ENCODE measurements at regions of chr1 and their contacts with region 1.

Region 1: DNA sequence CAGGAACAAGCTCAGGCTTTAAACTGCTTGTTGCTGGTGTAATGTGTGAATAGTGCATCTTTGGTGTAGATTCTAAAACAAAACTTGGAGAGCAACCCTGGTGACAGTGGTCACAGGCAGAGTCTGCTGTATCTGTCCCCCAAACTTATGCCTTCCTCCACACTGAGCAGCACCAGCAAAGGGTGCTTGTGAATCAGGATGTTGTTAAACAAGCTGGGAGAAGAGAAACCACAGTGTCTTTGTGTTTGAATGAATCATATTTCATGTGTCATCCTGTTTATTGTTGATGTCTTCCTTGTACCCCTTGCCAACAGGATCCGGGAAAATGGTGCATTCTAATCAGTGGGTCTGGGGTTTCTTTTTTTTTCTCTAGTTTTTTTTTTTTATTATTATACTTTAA is 91.9 kb upstream of the COG2 start:
- DNase-seq: no peak
- H3K4me3 ChIP-seq: no peak overlapping the region
- H3K27ac ChIP-seq: no peak overlapping the region
- H3K4me1 ChIP-seq: no peaks in the 10 kb centered on the region
- H3K27me3 ChIP-seq: no peaks in the 10 kb centered on the region
- CTCF ChIP-seq: no peak
- EP300 ChIP-seq: no peak
- POLR2A ChIP-seq: no peak
- RAD21 ChIP-seq: no peak

Region 2: GRCh38 chr1:230509281-230509977 is 41.0 kb before region 1 on chr1:
- CTCF ChIA-PET with region 1: no interaction called
- POLR2A ChIA-PET with region 1: no interaction called
- DNase-seq: no peak
- H3K4me3 ChIP-seq: no peak overlapping the region
- H3K27ac ChIP-seq: no peak overlapping the region
- H3K4me1 ChIP-seq: no peaks in the 10 kb centered on the region
- H3K27me3 ChIP-seq: no peaks in the 10 kb centered on the region
- CTCF ChIP-seq: no peak
- EP300 ChIP-seq: no peak
- POLR2A ChIP-seq: no peak
- RAD21 ChIP-seq: no peak

Region 3: GRCh38 chr1:230537456-230537855 is 13.0 kb before region 1 on chr1:
- CTCF ChIA-PET with region 1: interaction called, 14 read pairs
- POLR2A ChIA-PET with region 1: no interaction called
- DNase-seq: peak; percentile 15 to 82
- H3K4me3 ChIP-seq: no peak overlapping the region
- H3K27ac ChIP-seq: no peak overlapping the region
- H3K4me1 ChIP-seq: no peaks in the 10 kb centered on the region; a peak in 1 of 7 replicates
- H3K27me3 ChIP-seq: no peaks in the 10 kb centered on the region
- CTCF ChIP-seq: peak; percentile 68 to 87 (median 79)
- EP300 ChIP-seq: no peak
- POLR2A ChIP-seq: no peak
- RAD21 ChIP-seq: peak; percentile 64 to 81

Region 4: DNA sequence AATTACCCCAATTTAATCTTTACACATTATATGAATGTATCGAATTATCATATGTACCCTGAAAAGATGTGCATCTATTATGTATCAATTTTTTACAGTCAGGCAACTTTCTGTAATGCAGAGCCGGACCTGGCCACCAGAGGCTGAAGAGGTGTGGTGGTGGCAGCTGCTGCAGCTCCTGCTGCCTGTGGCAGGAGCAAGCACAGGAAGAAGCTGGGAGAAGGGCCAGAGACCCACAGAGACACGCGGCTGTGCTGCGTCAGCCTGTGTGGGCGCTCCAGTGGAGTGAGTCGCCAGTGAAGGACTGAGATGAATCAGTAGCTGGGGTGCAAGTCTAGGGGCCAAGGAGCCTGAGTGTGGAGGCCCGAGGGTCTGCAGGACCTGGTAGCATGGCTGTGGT is 17.6 kb after region 1 on chr1:
- CTCF ChIA-PET with region 1: interaction called, 11 read pairs
- POLR2A ChIA-PET with region 1: no interaction called
- DNase-seq: peak in 1 of 2 experiments; percentile 46
- H3K4me3 ChIP-seq: no peak overlapping the region
- H3K27ac ChIP-seq: no peak overlapping the region
- H3K4me1 ChIP-seq: peaks cover 0 to 7% (median 3%) of the 10 kb centered on the region in 4 experiments
- H3K27me3 ChIP-seq: no peaks in the 10 kb centered on the region
- CTCF ChIP-seq: peak; percentile 60 to 69 (median 66)
- EP300 ChIP-seq: no peak
- POLR2A ChIP-seq: no peak
- RAD21 ChIP-seq: peak; percentile 48 to 62

Region 5: GRCh38 chr1:230588323-230588746 is 37.9 kb after region 1 on chr1:
- CTCF ChIA-PET with region 1: no interaction called
- POLR2A ChIA-PET with region 1: no interaction called
- DNase-seq: no peak
- H3K4me3 ChIP-seq: no peak overlapping the region
- H3K27ac ChIP-seq: no peak overlapping the region
- H3K4me1 ChIP-seq: no peaks in the 10 kb centered on the region
- H3K27me3 ChIP-seq: no peaks in the 10 kb centered on the region
- CTCF ChIP-seq: no peak
- EP300 ChIP-seq: no peak
- POLR2A ChIP-seq: no peak
- RAD21 ChIP-seq: no peak

Measured in H1 (cell line).